ENCODE measurements at regions of chr3 and their contacts with region 1.

Region 1: GRCh38 chr3:128794770-128795649 is 69.0 kb downstream of the RAB7A start:
- DNase-seq: peak; percentile 81
- ATAC-seq: peak; percentile 99
- H3K4me3 ChIP-seq: no peak overlapping the region
- H3K4me3 Mint-ChIP-seq: no peak overlapping the region
- H3K27ac ChIP-seq: no peak overlapping the region
- H3K27ac Mint-ChIP-seq: peak overlapping the region; percentile 32
- H3K4me1 ChIP-seq: peaks cover 17 to 22% of the 10 kb centered on the region in 2 donors
- H3K4me1 Mint-ChIP-seq: peaks cover 49% of the 10 kb centered on the region
- H3K27me3 ChIP-seq: no peaks in the 10 kb centered on the region
- H3K27me3 Mint-ChIP-seq: no peaks in the 10 kb centered on the region
- CTCF ChIP-seq: peak; percentile 80

Region 2: DNA sequence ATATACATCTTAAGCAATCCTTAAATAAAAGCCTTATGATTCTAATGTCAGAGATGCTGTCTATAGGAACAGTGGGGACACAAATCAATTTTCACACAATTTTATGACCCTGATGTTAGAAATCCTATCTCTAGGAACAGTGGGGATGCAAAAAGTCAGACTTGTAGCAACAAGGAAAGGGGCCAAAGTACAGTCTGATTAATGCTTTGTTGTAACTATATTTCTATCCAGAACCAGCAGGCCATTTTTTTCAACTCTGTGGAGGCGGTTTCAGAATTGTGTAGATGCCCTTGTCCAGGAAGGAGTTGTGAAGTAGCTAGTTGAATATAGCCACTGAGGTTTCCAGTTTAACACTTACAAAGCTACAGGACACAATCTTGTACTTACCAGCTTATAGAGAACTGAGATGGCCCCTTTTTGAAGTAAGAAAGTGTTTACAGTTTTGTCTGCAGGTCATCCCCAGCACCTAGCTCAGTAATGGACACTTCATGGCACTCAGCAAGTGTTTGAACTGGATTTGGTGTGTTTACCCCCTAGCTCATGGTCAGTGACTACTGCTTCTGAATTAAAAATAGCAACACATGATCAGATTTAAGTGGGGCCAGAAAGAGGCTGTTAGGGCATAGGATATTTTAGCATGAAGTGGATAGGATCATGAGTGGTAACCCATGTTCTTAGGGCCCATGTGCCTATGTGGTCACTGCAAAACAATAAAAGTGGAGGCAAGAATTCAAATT is 14.7 kb before region 1 on chr3:
- CTCF ChIA-PET with region 1: interaction called, 18 read pairs
- POLR2A ChIA-PET with region 1: no interaction called
- intact Hi-C with region 1: no loop called
- DNase-seq: no peak
- ATAC-seq: no peak
- H3K4me3 ChIP-seq: no peak overlapping the region
- H3K4me3 Mint-ChIP-seq: no peak overlapping the region
- H3K27ac ChIP-seq: peak overlapping the region in 1 of 2 donors; percentile 10
- H3K27ac Mint-ChIP-seq: peak overlapping the region; percentile 21
- H3K4me1 ChIP-seq: peaks cover 22 to 24% of the 10 kb centered on the region in 2 donors
- H3K4me1 Mint-ChIP-seq: peaks cover 87% of the 10 kb centered on the region
- H3K27me3 ChIP-seq: no peaks in the 10 kb centered on the region
- H3K27me3 Mint-ChIP-seq: no peaks in the 10 kb centered on the region
- CTCF ChIP-seq: no peak

Region 3: DNA sequence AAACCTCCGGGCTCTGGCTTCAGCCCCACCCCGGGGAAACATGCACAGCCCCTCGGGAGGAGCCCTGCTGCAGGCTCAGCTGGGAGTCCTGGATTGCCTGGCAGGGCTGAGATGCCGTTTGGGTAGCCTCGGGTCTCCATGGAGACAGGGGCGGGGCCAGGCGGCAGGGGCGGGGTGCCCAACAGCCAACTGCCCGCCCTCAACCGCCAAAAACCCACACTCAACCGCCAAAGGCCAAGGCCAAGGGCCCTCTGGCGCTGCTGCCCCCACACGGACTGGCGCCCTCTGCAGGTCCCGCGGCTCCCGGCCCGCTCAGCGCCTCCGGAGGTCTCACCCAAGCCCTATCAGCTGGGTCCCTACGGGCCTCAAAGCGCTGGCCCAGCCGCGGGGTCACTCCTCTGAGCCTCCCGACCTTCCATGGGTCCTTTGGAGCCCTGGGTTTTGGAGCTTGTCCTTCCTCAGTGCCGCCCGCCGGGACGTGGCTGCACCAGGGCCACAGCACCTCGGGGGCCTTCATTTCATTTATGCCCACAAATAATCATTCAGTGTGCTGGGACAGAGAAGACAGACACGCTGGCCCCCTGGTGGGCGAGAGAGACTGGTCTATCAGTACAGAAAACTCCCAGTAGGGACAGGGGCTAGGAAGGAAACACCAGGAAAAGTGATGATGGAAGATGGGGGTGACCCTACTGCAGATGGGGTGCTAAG is 50.9 kb after region 1 on chr3:
- CTCF ChIA-PET with region 1: no interaction called
- POLR2A ChIA-PET with region 1: no interaction called
- intact Hi-C with region 1: loop called (anchors 5 kb)
- DNase-seq: peak; percentile 82
- ATAC-seq: peak; percentile 86
- H3K4me3 ChIP-seq: peak overlapping the region in 4 of 5 experiments; percentile 45 to 70 (median 58)
- H3K4me3 Mint-ChIP-seq: peak overlapping the region; percentile 85
- H3K27ac ChIP-seq: peak overlapping the region in 1 of 2 donors; percentile 52
- H3K27ac Mint-ChIP-seq: peak overlapping the region; percentile 56
- H3K4me1 ChIP-seq: peaks cover 11 to 17% of the 10 kb centered on the region in 2 donors
- H3K4me1 Mint-ChIP-seq: peaks cover 11% of the 10 kb centered on the region
- H3K27me3 ChIP-seq: no peaks in the 10 kb centered on the region
- H3K27me3 Mint-ChIP-seq: no peaks in the 10 kb centered on the region
- CTCF ChIP-seq: peak; percentile 85